SK-N-SH (cell line): ENCODE measurements at regions of chr1 and their contacts with region 1.

Region 1: DNA sequence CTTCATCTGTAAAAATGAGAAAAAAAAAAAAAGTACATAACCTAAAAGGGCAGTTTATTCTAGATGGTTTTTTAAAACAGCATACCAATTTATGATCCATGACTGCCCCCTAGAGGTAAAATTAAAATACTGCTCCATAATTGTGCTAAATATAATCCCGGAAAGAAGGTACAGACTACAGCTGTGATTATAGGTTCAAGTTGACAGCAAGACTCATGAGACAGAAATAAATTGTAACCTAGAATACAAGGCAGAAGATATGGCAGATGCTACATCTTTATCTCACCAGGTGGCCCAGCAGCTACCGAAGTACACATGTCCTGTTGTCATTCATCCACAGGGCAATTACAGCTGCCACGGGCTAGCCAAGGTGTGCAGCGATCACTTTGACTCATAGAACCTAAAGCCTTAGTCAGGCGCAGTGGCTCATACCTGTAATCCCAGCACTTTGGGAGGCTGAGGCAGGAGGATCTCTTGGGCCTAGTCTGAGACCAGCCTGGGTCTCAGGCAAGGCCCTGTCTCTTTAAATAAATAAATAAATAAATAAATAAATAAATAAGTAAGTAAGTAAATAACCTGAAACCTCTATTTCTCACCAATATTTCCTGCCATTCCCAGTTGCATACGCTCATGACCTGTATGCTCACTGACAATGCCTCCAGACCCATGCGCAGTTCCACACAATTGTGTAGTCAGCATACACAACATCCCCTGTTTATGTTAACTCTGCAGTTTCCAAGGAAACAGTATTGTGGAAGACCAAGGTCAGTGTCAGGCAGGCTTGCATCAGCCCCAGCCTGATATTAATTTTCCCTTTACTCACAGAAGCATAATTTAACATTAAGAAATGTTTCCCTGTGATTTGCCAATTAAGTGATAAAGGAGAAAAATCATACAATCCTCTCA is 18.3 kb upstream of the PPIE start:
- DNase-seq: peak; percentile 48
- H3K4me3 ChIP-seq: no peak overlapping the region; a peak in 1 of 4 replicates
- H3K27ac ChIP-seq: no peak overlapping the region
- H3K4me1 ChIP-seq: peaks cover 0 to 2% of the 10 kb centered on the region in 2 experiments; a peak in 1 of 4 replicates
- H3K27me3 ChIP-seq: peaks cover 10% of the 10 kb centered on the region; the same call in 1 of the 2 replicates
- CTCF ChIP-seq: peak; percentile 84
- EP300 ChIP-seq: no peak
- RAD21 ChIP-seq: peak; percentile 88

Region 2: GRCh38 chr1:39189592-39190041 is 530.7 kb before region 1 on chr1:
- CTCF ChIA-PET with region 1: interaction called, 13 read pairs
- POLR2A ChIA-PET with region 1: no interaction called
- DNase-seq: no peak
- H3K4me3 ChIP-seq: no peak overlapping the region
- H3K27ac ChIP-seq: peak overlapping the region; percentile 14 to 99; a peak in 3 of 4 replicates
- H3K4me1 ChIP-seq: peaks cover 5 to 68% of the 10 kb centered on the region in 2 experiments; a peak in 3 of 4 replicates
- H3K27me3 ChIP-seq: no peaks in the 10 kb centered on the region
- CTCF ChIP-seq: no peak
- EP300 ChIP-seq: peak; percentile 18 to 61; a peak in 3 of 4 replicates
- RAD21 ChIP-seq: no peak

Region 3: DNA sequence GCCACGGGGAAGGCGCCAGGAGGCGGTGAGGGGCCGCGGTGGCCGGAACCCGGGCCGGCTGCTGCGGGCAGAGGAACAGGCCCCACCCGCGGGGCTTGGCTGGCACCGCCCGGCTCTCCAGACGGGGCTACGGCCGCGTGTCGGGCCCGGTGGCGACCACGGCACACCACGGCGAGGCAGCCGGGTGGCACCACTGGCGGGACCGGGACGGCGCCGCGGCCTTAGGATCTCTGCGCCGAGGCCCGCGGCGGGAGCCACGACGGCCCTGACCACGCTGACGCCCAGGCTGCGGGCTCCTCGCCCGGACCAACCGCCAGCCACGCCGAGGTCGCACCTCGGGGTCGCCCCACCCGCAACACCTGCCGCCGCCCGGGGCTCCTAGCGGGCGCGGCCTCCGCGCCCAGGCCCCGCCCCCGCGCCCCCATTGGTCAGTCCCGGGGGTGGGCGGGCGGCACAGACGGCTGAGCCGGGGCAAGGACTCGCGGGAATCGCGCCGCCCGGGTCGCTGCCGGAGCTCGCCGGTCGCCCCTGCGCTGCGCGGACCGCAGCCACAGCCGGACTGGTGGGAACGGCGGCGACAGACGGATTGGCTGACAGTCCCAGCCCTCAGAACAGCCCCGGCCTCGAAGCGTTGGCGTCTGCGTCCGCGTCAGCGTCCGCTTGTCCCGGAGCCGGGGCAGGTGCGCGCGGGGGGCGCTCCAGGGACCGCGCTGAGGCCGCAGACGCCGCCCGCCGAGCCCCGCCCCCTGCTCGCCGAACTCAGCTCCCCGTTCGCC is 229.0 kb before region 1 on chr1 and contains the start of gene BMP8A:
- CTCF ChIA-PET with region 1: no interaction called
- POLR2A ChIA-PET with region 1: no interaction called
- DNase-seq: peak; percentile 96
- H3K4me3 ChIP-seq: peak within 1 kb of the TSS in 1 of 2 experiments; percentile 40; a peak in 3 of 4 replicates
- H3K27ac ChIP-seq: no peak within 1 kb of the TSS
- H3K4me1 ChIP-seq: no peaks in the 10 kb centered on the region; a peak in 1 of 4 replicates
- H3K27me3 ChIP-seq: no peaks in the 10 kb centered on the region; the same call in 1 of the 2 replicates
- CTCF ChIP-seq: no peak
- EP300 ChIP-seq: no peak
- RAD21 ChIP-seq: no peak
- polyA plus RNA-seq, gene BMP8A: 0.05 and 0.16 TPM in 2 replicates

Region 4: DNA sequence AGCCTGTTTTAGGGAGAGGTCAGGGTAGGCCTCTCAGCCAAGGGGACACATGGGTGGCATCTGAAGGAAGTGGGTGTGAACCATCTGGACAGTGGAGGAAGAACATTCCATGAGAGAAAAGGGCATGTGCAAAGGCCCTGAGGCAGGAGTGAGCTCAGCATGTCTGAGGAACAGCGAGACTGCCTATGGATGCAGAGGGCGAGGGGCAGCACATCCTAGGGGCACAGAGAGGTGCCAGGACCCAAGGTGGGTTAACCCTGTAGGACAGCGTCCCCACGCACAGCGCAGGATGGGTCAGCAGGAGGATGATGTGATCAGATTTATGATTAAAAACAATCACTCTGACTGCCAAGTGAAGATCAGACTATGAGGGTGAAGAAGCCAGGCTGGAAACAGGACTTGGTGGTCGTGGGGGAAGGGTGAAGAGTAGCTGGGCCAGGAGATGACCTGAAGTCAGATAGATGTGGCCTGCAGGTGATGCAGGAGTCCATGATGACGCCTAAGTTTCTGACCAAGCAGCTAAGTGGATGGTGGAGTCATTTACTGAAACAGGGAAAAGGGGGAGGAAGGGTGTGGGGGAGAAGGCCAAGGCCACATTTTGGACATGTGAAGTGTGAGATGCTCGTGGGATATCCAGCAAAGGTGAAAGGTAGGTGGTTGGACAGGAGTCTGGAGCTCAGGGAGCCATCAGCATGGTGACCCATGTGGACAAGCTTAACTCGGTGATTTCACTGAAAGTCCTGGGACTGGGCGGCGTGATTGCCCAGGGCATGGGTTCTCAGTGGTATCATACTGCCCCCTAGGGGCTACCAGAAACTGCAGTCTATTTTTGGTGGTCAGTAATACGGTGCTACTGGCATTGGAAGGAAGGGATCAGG is 181.5 kb before region 1 on chr1:
- CTCF ChIA-PET with region 1: interaction called, 10 read pairs
- POLR2A ChIA-PET with region 1: no interaction called
- DNase-seq: peak; percentile 85
- H3K4me3 ChIP-seq: no peak overlapping the region; a peak in 1 of 4 replicates
- H3K27ac ChIP-seq: no peak overlapping the region
- H3K4me1 ChIP-seq: no peaks in the 10 kb centered on the region; a peak in 1 of 4 replicates
- H3K27me3 ChIP-seq: no peaks in the 10 kb centered on the region
- CTCF ChIP-seq: peak; percentile 95
- EP300 ChIP-seq: no peak
- RAD21 ChIP-seq: peak; percentile 90

Region 5: DNA sequence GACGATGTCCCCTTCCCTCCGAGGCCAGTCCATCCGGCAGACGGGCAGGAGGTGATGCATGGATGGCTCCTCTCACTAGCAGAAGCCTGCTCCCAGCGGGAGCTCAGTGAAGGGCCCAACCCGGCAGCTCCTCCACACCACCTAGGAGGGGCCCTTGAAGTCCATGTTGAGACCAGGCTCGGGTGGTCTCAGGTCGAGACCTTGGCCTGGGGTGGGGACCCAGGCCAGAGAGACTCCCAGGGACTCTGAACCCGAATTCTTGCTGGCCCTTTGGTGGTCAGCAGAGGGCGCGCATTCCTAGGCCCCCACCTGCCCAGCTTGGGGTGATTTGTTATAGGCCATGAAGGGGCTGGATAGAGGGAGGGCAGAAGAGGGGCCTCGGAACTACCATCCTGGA is 47.8 kb before region 1 on chr1:
- CTCF ChIA-PET with region 1: interaction called, 24 read pairs
- POLR2A ChIA-PET with region 1: no interaction called
- DNase-seq: peak; percentile 77
- H3K4me3 ChIP-seq: peak overlapping the region; percentile 57 to 63
- H3K27ac ChIP-seq: peak overlapping the region in 1 of 2 experiments; percentile 87; a peak in 2 of 4 replicates
- H3K4me1 ChIP-seq: peaks cover 0 to 27% of the 10 kb centered on the region in 2 experiments; a peak in 1 of 4 replicates
- H3K27me3 ChIP-seq: peaks cover 44% of the 10 kb centered on the region
- CTCF ChIP-seq: peak; percentile 72
- EP300 ChIP-seq: no peak
- RAD21 ChIP-seq: peak; percentile 44

Region 6: DNA sequence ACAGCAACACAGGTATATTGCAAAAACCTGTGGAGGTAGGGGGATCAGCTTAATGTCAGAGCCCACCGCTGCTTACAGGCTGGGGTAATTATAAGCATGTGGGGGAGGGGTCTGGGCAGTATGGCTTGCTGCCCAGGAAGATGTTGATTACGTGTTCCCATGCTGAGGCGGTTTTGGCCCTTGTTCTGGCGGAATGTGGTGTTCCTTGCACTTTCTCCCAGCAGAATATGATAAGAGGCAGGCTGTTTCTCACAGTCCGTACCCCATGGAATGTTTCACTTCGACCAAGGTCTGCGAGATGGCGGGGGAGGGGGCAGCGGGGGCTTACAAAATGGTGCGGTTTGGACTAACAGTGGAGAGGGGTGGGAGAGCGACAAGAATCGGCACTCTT is 19.3 kb before region 1 on chr1:
- CTCF ChIA-PET with region 1: interaction called, 18 read pairs
- POLR2A ChIA-PET with region 1: no interaction called
- DNase-seq: no peak
- H3K4me3 ChIP-seq: no peak overlapping the region
- H3K27ac ChIP-seq: no peak overlapping the region
- H3K4me1 ChIP-seq: peaks cover 0 to 17% of the 10 kb centered on the region in 2 experiments; a peak in 1 of 4 replicates
- H3K27me3 ChIP-seq: peaks cover 17% of the 10 kb centered on the region; the same call in 1 of the 2 replicates
- CTCF ChIP-seq: no peak
- EP300 ChIP-seq: no peak
- RAD21 ChIP-seq: no peak

Region 7: GRCh38 chr1:39776400-39776713 is 56.0 kb after region 1 on chr1:
- CTCF ChIA-PET with region 1: no interaction called
- POLR2A ChIA-PET with region 1: no interaction called
- DNase-seq: no peak
- H3K4me3 ChIP-seq: no peak overlapping the region
- H3K27ac ChIP-seq: no peak overlapping the region
- H3K4me1 ChIP-seq: no peaks in the 10 kb centered on the region; a peak in 1 of 4 replicates
- H3K27me3 ChIP-seq: peaks cover 6% of the 10 kb centered on the region; the same call in 1 of the 2 replicates
- CTCF ChIP-seq: no peak
- EP300 ChIP-seq: no peak
- RAD21 ChIP-seq: no peak